ENCODE measurements at regions of chr16 and their contacts with region 1.

Region 1: GRCh38 chr16:29995911-29996772 is at the start of gene INO80E:
- DNase-seq: peak; percentile 97 to 100 (median 99)
- ATAC-seq: peak; percentile 95 to 98 (median 96)
- H3K4me3 ChIP-seq: peak within 1 kb of the TSS; percentile 99
- H3K4me3 Mint-ChIP-seq: peak within 1 kb of the TSS; percentile 96 to 99 (median 97)
- H3K27ac ChIP-seq: peak within 1 kb of the TSS; percentile 99
- H3K27ac Mint-ChIP-seq: peak within 1 kb of the TSS; percentile 95 to 97
- H3K4me1 ChIP-seq: peaks cover 11 to 29% of the 10 kb centered on the region in 2 experiments
- H3K4me1 Mint-ChIP-seq: peaks cover 32 to 47% (median 43%) of the 10 kb centered on the region in 3 donors
- H3K27me3 ChIP-seq: no peaks in the 10 kb centered on the region
- H3K27me3 Mint-ChIP-seq: no peaks in the 10 kb centered on the region
- total RNA-seq, gene INO80E: 84.8 to 152 (median 128) TPM

Region 2: GRCh38 chr16:29012913-29013553 is 983.1 kb before region 1 on chr16:
- CTCF ChIA-PET with region 1: no interaction called
- POLR2A ChIA-PET with region 1: interaction called in 1 of 2 experiments, 12 read pairs
- DNase-seq: peak in 28 of 35 experiments; percentile 16 to 75 (median 43)
- ATAC-seq: peak; percentile 63 to 83 (median 72)
- H3K4me3 ChIP-seq: no peak overlapping the region
- H3K4me3 Mint-ChIP-seq: peak overlapping the region; percentile 21 to 76 (median 40)
- H3K27ac ChIP-seq: peak overlapping the region; percentile 67
- H3K27ac Mint-ChIP-seq: peak overlapping the region; percentile 99
- H3K4me1 ChIP-seq: peaks cover 37 to 66% of the 10 kb centered on the region in 2 experiments
- H3K4me1 Mint-ChIP-seq: peaks cover 60 to 73% (median 64%) of the 10 kb centered on the region in 3 donors
- H3K27me3 ChIP-seq: no peaks in the 10 kb centered on the region
- H3K27me3 Mint-ChIP-seq: no peaks in the 10 kb centered on the region

Region 3: DNA sequence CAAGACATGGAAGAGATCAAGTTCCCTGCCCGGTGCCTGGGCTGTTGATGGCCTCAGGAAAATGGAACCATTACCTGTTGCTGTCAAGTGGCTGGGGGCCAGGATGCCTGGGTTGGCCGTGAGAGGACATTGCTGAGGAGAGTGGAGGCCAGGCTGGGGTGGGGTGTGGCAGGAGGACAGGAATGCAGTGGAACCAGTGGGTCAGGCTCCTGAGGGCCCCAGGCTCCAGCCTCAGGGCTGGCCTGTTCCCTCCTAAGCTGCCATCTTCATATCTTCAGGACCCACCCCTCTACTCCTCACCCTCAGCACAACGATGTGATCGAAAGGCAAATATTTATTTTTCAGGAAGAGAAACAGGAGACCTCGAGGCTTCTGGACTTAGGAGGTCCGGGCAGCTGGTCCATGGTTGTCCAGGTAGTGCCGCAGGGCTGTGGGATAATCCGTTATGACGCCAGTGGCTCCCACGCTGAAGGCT is 108.4 kb after region 1 on chr16:
- CTCF ChIA-PET with region 1: no interaction called
- POLR2A ChIA-PET with region 1: no interaction called
- DNase-seq: no peak
- ATAC-seq: no peak
- H3K4me3 ChIP-seq: no peak overlapping the region
- H3K4me3 Mint-ChIP-seq: no peak overlapping the region
- H3K27ac ChIP-seq: no peak overlapping the region
- H3K27ac Mint-ChIP-seq: peak overlapping the region in 1 of 2 donors; percentile 24
- H3K4me1 ChIP-seq: no peaks in the 10 kb centered on the region
- H3K4me1 Mint-ChIP-seq: peaks cover 0 to 2% (median 0%) of the 10 kb centered on the region in 3 donors
- H3K27me3 ChIP-seq: no peaks in the 10 kb centered on the region
- H3K27me3 Mint-ChIP-seq: no peaks in the 10 kb centered on the region

Measured in T-cell (primary cell).